ENCODE measurements at regions of chr9 and their contacts with region 1.

Region 1: GRCh38 chr9:136885950-136886578 is at the start of gene TRAF2:
- DNase-seq: peak; percentile 98 to 99
- ATAC-seq: peak; percentile 93 to 99 (median 98)
- H3K4me3 ChIP-seq: peak within 1 kb of the TSS; percentile 80 to 99 (median 95)
- H3K27ac ChIP-seq: peak within 1 kb of the TSS in 9 of 10 donors; percentile 83 to 95 (median 93)
- H3K4me1 ChIP-seq: peaks cover 13 to 48% (median 37%) of the 10 kb centered on the region in 9 donors
- H3K27me3 ChIP-seq: no peaks in the 10 kb centered on the region
- CTCF ChIP-seq: peak in 2 of 9 donors; percentile 23 to 26
- total RNA-seq, gene TRAF2: 5.4 to 14.8 (median 9.7) TPM

Region 2: DNA sequence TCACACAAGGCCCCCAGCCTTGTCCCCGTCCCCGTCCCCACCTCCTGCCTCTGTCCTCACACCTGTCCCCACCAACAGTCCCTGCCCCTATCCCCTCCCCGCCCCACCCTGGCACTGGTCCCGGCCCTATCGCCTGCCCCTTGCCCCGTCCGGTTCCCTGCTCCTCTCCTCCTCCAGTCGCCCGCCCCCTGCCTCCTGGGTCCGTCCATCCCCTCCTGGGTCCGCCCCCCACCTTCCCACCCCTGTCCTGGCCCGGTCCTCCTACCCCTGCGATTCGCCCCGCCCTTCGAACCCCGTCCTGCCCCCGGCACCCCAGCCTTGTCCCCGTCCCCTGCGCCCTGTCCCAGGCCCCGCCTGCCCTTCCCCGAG is 20.3 kb before region 1 on chr9:
- intact Hi-C with region 1: loop called in 1 of 10 experiments (anchors 2 kb)
- DNase-seq: no peak
- ATAC-seq: peak in 7 of 8 donors; percentile 2 to 39 (median 8)
- H3K4me3 ChIP-seq: peak overlapping the region; percentile 70 to 98 (median 82)
- H3K27ac ChIP-seq: peak overlapping the region; percentile 87 to 96 (median 92)
- H3K4me1 ChIP-seq: peaks cover 8 to 31% (median 25%) of the 10 kb centered on the region in 9 donors
- H3K27me3 ChIP-seq: no peaks in the 10 kb centered on the region
- CTCF ChIP-seq: no peak

Region 3: DNA sequence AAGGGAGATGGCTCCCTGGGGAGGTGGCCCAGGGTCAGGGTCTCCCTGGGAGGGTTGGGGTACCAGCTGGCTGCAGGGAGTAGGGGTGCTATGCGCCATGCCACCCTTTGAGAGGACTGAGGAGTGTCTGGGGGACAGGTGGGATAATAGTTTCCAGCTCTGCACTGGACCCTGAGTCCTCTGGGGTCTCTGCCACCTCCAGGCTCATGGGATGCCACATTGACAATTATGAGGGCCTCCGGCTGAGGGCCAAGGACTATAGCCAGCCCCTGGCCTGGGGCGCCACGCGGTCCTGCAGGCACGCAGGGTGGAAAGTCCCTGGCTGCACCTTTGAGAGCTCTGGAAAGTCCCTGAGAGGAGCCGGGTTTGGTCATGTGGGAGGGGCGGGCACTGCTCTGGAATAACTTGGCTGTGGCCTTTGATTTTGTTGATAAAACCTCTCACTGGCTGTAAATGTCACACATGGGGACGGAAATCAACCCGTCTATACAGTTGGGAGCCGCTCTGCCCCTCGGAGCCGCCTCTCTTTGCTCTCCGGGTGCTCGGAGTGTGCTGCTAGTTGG is 16.3 kb after region 1 on chr9:
- intact Hi-C with region 1: loop called in 1 of 10 experiments (anchors 2 kb)
- DNase-seq: peak; percentile 70 to 85
- ATAC-seq: peak; percentile 80 to 95 (median 91)
- H3K4me3 ChIP-seq: peak overlapping the region in 3 of 10 donors; percentile 2 to 10 (median 10)
- H3K27ac ChIP-seq: peak overlapping the region; percentile 50 to 90 (median 84)
- H3K4me1 ChIP-seq: peaks cover 19 to 53% (median 35%) of the 10 kb centered on the region in 9 donors
- H3K27me3 ChIP-seq: no peaks in the 10 kb centered on the region
- CTCF ChIP-seq: no peak

Region 4: GRCh38 chr9:136928591-136928990 is 42.5 kb after region 1 on chr9:
- intact Hi-C with region 1: loop called in 4 of 10 experiments (anchors 5 to 10 kb)
- DNase-seq: peak; percentile 42 to 70
- ATAC-seq: peak; percentile 63 to 93 (median 84)
- H3K4me3 ChIP-seq: peak overlapping the region in 4 of 10 donors; percentile 8 to 14 (median 12)
- H3K27ac ChIP-seq: peak overlapping the region; percentile 43 to 91 (median 84)
- H3K4me1 ChIP-seq: peaks cover 19 to 69% (median 58%) of the 10 kb centered on the region in 9 donors
- H3K27me3 ChIP-seq: no peaks in the 10 kb centered on the region
- CTCF ChIP-seq: peak in 5 of 9 donors; percentile 6 to 43 (median 22)

Region 5: DNA sequence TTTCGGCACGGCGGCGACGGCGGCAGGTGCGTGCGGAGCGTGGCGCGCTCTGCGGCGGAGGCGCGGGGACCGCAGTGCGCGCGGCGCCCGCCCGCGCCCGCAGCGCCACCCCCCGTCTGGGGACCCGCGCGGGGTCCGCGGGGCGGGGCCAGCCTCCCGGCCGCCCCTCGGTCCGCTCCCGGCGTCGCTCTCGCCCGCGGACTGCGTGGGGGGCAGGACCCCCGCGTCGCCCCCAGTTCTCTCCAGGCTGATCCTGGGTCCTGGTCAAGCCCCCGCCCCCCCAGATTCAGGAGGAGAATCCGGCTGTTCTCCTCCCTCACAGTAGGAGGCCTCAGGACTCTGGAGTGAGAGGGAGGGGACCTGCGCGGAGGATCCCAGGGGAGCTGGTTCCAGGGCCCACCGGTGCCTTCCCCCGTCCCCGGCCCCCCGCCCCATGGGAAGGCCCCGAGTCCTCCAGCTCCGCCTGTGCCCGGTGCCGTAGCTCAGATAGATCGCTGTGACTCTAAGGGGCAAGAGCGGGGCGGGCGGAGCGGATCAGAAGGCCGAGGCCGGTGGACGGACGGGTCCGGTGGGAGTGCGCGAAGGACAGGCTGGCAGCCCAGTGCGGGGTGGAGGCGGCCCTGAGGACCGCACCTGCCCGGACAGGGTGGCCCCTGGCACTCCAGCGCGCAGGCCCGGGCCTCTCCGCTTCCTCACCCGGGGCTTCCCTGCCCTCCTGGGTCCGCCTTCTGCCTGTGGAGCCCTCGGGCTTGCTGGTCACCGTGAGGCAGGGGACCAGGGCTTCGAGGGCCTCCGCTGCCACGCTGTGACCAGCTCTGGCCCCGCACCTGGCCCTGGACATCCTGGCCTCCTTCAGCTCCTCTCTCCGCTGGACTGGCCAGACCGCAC is 336.4 kb after region 1 on chr9 and contains the start of gene RNF208:
- intact Hi-C with region 1: no loop called
- DNase-seq: peak in 1 of 2 donors; percentile 45
- ATAC-seq: peak; percentile 1 to 12 (median 3)
- H3K4me3 ChIP-seq: peak within 1 kb of the TSS; percentile 44 to 94 (median 71)
- H3K27ac ChIP-seq: peak within 1 kb of the TSS; percentile 70 to 96 (median 92)
- H3K4me1 ChIP-seq: peaks cover 17 to 52% (median 37%) of the 10 kb centered on the region in 9 donors
- H3K27me3 ChIP-seq: peaks cover 0 to 5% (median 0%) of the 10 kb centered on the region in 7 donors
- CTCF ChIP-seq: peak in 1 of 9 donors; percentile 5
- total RNA-seq, gene RNF208: 20.7 to 34.5 (median 24.1) TPM

Measured in heart right ventricle (tissue), 16 donors.